HEK293 (cell line): ENCODE measurements at regions of chr15 and their contacts with region 1.

Region 1: DNA sequence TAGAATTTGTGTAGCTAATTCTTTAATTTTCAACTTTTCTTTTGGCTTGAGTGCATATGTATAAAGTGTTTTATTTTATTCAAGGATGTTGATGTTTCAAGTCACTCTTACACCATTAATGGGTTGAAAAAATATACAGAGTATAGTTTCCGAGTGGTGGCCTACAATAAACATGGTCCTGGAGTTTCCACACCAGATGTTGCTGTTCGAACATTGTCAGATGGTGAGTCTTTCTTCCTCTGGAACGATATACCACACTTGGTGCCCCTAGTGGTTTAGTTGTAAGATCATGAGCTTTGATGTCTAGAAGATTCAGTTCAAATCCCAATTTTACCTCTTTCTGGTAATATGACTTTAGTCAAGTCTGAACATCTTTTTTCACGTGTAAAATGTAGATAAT is 119.3 kb downstream of the HCN4 start:
- H3K4me3 ChIP-seq: no peak overlapping the region
- H3K27ac ChIP-seq: no peak overlapping the region
- H3K4me1 ChIP-seq: no peaks in the 10 kb centered on the region
- CTCF ChIP-seq: no peak

Region 2: GRCh38 chr15:73265536-73266153 is 16.1 kb after region 1 on chr15:
- CTCF ChIA-PET with region 1: interaction called, 82 read pairs
- POLR2A ChIA-PET with region 1: no interaction called
- H3K4me3 ChIP-seq: no peak overlapping the region
- H3K27ac ChIP-seq: no peak overlapping the region
- H3K4me1 ChIP-seq: no peaks in the 10 kb centered on the region
- CTCF ChIP-seq: 0 out of 2 replicates have a peak, but pooled peaks have one; percentile 20

Region 3: DNA sequence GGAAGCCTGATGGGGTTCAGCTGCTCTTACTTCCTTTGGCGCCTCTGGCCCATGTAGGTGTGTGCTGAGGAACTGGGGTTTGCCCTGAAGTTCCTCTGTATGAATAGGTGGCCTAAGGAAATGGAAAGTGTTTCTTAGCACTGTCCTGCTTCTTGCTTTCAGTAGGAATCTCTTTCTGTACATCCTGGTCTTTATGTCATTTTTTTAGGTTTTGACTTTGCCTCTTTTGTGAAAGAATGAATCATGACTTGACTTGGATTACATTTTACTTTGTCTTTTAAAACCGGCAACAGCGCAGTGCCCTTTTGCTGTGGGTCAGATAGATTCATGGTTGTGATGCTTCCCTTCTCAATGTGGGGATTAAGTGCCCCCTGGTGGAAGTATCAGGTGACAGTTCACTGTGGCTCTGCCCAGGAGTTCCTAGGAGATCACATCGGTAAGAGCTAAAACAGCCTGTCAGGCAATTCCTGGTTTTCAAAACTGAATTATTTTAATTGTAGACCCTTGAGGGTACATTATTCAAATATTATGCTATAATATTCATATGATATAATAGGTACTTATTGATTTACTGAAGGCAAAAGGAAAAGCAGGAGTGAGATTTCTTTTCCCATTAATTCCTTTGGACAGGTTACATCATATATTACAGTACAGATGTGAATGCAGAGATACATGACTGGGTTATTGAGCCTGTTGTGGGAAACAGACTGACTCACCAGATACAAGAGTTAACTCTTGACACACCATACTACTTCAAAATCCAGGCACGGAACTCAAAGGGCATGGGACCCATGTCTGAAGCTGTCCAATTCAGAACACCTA is 23.9 kb after region 1 on chr15:
- CTCF ChIA-PET with region 1: interaction called, 82 read pairs
- POLR2A ChIA-PET with region 1: no interaction called
- H3K4me3 ChIP-seq: no peak overlapping the region
- H3K27ac ChIP-seq: no peak overlapping the region
- H3K4me1 ChIP-seq: no peaks in the 10 kb centered on the region
- CTCF ChIP-seq: peak; percentile 52; the same call in 1 of the 2 replicates